Activated CD4-positive, alpha-beta T cell treated with anti-CD3 and anti-CD28 coated beads for 36 hours (primary cell): ENCODE measurements at regions of chr1 and their contacts with region 1.

Region 1: GRCh38 chr1:18883636-18884418 is 18.5 kb downstream of the ALDH4A1 start:
- DNase-seq: peak; percentile 85
- ATAC-seq: peak; percentile 87
- H3K4me3 Mint-ChIP-seq: no peak overlapping the region
- H3K27ac Mint-ChIP-seq: no peak overlapping the region
- H3K4me1 Mint-ChIP-seq: no peaks in the 10 kb centered on the region
- H3K27me3 Mint-ChIP-seq: no peaks in the 10 kb centered on the region

Region 2: GRCh38 chr1:18805925-18806849 is 77.6 kb before region 1 on chr1:
- CTCF ChIA-PET with region 1: no interaction called
- POLR2A ChIA-PET with region 1: no interaction called
- intact Hi-C with region 1: no loop called
- DNase-seq: no peak
- ATAC-seq: no peak
- H3K4me3 Mint-ChIP-seq: no peak overlapping the region
- H3K27ac Mint-ChIP-seq: no peak overlapping the region
- H3K4me1 Mint-ChIP-seq: no peaks in the 10 kb centered on the region
- H3K27me3 Mint-ChIP-seq: peaks cover 8% of the 10 kb centered on the region

Region 3: DNA sequence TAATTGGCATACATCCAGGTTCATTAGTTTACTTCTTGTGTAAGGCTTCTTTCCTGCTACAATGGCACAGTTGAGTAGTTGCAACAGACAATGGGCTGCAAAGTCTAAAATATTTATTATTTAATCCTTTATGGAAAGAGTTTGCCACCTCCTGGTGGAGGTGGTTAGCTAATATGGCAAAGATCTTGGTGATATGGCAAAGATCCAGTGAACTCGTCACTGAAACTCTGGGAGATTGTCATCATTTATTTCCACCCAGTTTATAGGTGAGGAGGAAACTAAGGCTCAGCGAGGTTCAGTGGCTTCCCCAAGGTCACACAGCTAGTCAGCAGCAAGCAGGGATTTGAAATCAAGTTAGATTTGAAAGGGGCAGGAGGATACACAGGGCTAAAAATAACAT is 88.7 kb after region 1 on chr1:
- CTCF ChIA-PET with region 1: interaction called, 5 read pairs
- POLR2A ChIA-PET with region 1: no interaction called
- intact Hi-C with region 1: loop called in 1 of 2 experiments (anchors 1 kb)
- DNase-seq: no peak
- ATAC-seq: peak; percentile 42
- H3K4me3 Mint-ChIP-seq: no peak overlapping the region
- H3K27ac Mint-ChIP-seq: no peak overlapping the region
- H3K4me1 Mint-ChIP-seq: peaks cover 8% of the 10 kb centered on the region
- H3K27me3 Mint-ChIP-seq: peaks cover 2% of the 10 kb centered on the region

Region 4: GRCh38 chr1:19096036-19096833 is 212.4 kb after region 1 on chr1:
- CTCF ChIA-PET with region 1: interaction called, 6 read pairs
- POLR2A ChIA-PET with region 1: no interaction called
- intact Hi-C with region 1: loop called (anchors 1 kb)
- DNase-seq: peak; percentile 41
- ATAC-seq: no peak
- H3K4me3 Mint-ChIP-seq: no peak overlapping the region
- H3K27ac Mint-ChIP-seq: no peak overlapping the region
- H3K4me1 Mint-ChIP-seq: no peaks in the 10 kb centered on the region
- H3K27me3 Mint-ChIP-seq: no peaks in the 10 kb centered on the region

Region 5: DNA sequence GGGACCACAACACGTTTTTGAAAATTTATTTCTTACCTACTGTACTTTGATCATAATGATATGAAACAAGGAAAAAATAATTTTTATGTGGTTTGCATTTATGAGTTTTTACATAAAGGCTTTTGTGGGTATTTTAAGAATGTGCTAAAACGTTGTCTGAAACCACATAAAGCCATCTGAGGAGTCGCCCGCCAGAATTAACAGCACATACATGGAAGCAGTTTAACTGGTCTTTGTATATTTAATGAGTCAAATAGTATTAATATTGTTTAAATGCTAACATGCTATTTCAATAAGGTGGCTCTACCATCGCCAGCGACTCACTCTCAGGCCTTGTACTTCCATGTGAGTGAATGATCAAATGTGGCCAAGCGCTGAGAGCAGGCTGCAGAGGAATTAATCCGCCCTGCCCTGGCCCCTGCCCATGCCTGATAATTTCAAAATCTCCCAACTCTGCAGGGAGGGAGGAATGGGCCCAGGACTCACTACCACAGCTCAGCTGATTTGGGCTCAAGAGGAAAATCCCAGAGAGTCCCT is 477.9 kb after region 1 on chr1:
- CTCF ChIA-PET with region 1: no interaction called
- POLR2A ChIA-PET with region 1: no interaction called
- intact Hi-C with region 1: no loop called
- DNase-seq: no peak
- ATAC-seq: no peak
- H3K4me3 Mint-ChIP-seq: no peak overlapping the region
- H3K27ac Mint-ChIP-seq: no peak overlapping the region
- H3K4me1 Mint-ChIP-seq: peaks cover 34% of the 10 kb centered on the region
- H3K27me3 Mint-ChIP-seq: no peaks in the 10 kb centered on the region